ENCODE measurements at regions of chr5 and their contacts with region 1.

Region 1: DNA sequence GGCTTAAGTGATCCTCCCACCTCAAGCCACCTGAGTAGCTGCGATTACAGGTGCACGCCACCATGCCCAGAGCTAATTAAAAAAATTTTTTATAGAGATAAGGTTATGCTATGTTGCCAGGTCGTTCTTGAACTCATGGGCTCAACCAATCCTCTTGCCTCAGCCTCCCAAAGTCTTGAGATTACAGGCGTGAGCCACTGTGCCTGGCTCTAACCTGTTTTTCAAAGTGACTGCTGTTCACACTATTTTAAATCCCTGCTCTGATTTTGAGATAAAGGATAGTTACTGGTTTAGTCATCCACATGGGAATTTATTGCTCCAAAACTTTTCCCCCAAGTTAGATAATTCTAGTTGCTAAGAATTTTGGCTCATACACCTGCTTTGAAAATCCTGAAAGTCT is 48.2 kb upstream of the MTMR12 start:
- DNase-seq: no peak
- ATAC-seq: no peak
- H3K4me3 ChIP-seq: no peak overlapping the region
- H3K27ac ChIP-seq: no peak overlapping the region
- H3K4me1 ChIP-seq: no peaks in the 10 kb centered on the region
- H3K27me3 ChIP-seq: no peaks in the 10 kb centered on the region
- CTCF ChIP-seq: no peak
- POLR2A ChIP-seq: no peak
- RAD21 ChIP-seq: no peak

Region 2: DNA sequence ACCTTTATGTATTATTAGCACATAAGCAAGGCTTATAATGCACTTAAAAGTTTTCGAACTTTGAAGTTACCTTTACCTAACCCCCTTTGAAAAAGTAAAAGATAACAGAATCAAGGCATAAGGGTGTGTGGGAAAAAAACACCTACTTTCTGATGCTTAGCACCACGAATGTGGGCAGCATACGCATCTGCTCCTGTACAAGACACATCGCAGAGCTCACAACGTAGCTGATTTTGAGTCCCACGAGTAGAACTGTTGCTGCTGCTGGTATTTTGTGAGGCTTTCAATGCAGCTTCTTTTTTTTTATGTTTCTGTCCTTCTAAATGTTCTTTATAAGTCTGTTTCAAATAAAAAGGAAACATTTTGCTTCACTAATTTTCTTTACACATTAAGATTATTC is 42.9 kb after region 1 on chr5:
- CTCF ChIA-PET with region 1: no interaction called
- POLR2A ChIA-PET with region 1: no interaction called
- dilution Hi-C with region 1: no loop called
- in situ Hi-C with region 1: no loop called
- intact Hi-C with region 1: loop called (anchors 5 kb)
- DNase-seq: no peak
- ATAC-seq: no peak
- H3K4me3 ChIP-seq: no peak overlapping the region
- H3K27ac ChIP-seq: no peak overlapping the region
- H3K4me1 ChIP-seq: no peaks in the 10 kb centered on the region
- H3K27me3 ChIP-seq: no peaks in the 10 kb centered on the region
- CTCF ChIP-seq: no peak
- POLR2A ChIP-seq: no peak
- RAD21 ChIP-seq: no peak

Region 3: DNA sequence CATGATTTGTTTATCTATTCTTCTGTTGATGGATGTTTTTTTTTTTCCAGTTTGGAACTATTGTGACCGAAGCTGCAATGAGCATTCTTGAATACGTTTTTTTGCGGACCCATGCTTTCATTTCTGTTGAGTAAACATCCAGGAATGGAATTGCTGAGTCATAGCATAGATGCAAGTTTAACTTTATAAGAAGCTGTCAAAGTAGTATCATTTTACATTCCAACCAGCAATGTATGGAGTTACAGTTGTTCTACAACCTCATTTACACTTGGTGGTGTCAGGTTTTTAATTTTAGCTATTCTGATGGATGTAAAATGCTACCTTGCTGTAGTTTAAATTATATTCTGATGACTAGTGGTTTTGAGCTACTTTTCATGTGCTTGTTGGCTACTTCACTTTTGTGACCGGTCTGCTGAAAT is 399.2 kb after region 1 on chr5:
- CTCF ChIA-PET with region 1: no interaction called
- POLR2A ChIA-PET with region 1: no interaction called
- dilution Hi-C with region 1: no loop called
- in situ Hi-C with region 1: no loop called
- intact Hi-C with region 1: no loop called
- DNase-seq: peak; percentile 98
- ATAC-seq: peak; percentile 96
- H3K4me3 ChIP-seq: peak overlapping the region; percentile 2; the same call in 1 of the 2 replicates
- H3K27ac ChIP-seq: peak overlapping the region; percentile 46; the same call in 1 of the 2 replicates
- H3K4me1 ChIP-seq: peaks cover 2% of the 10 kb centered on the region; the same call in 1 of the 2 replicates
- H3K27me3 ChIP-seq: no peaks in the 10 kb centered on the region
- CTCF ChIP-seq: no peak
- POLR2A ChIP-seq: no peak
- RAD21 ChIP-seq: peak; percentile 13

Measured in IMR-90 (cell line).